ENCODE measurements at regions of chr1 and their contacts with region 1.

Region 1: DNA sequence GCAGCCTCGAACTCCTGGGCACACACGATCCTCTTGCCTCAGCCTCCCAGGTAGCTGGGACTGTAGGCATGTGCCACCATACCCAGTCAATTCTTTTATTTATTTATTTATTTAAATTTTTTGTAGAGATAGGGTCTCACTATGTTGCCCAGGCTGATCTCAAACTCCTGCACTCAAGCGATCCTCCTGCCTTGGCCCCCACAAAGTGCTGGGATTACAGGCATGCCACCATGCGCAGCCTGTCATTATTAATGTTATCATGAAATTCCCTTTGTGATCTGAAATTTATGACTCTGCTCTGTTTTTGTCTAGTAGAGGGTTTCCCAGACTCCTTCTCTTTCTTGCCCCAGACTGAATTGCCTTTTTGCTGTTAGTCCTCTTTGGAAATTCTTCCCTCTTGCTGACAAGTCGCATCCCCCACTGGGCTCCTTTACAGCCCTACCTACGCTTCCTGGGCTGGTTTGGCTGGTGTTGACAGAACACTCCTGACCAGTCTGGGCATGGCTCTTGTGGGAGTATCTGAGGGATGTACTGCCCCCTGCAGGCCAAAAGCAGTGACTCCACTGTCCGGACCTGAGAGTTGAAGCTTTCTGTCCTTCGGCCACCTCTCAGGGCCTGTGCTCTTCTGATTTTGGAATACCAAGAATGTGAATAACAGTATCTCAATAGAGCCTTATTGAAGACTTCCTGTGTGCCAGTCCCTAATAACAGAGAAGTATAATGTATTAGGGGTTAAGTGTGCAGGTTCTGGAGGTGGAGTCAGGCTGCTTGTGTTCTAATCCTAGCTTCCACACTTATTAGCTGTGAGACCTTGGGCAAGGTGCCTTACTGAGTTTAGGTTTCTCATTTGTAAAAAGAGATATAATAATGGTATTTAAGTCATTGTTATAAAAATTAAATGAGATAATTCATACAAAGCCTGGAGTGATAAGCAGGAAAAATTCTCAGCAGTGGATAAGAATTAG is 28.2 kb downstream of the TCEANC2 start:
- DNase-seq: peak; percentile 58 to 68 (median 62)
- H3K4me3 ChIP-seq: no peak overlapping the region
- H3K27ac ChIP-seq: no peak overlapping the region
- H3K4me1 ChIP-seq: peaks cover 0 to 11% (median 1%) of the 10 kb centered on the region in 4 experiments
- H3K27me3 ChIP-seq: no peaks in the 10 kb centered on the region

Region 2: DNA sequence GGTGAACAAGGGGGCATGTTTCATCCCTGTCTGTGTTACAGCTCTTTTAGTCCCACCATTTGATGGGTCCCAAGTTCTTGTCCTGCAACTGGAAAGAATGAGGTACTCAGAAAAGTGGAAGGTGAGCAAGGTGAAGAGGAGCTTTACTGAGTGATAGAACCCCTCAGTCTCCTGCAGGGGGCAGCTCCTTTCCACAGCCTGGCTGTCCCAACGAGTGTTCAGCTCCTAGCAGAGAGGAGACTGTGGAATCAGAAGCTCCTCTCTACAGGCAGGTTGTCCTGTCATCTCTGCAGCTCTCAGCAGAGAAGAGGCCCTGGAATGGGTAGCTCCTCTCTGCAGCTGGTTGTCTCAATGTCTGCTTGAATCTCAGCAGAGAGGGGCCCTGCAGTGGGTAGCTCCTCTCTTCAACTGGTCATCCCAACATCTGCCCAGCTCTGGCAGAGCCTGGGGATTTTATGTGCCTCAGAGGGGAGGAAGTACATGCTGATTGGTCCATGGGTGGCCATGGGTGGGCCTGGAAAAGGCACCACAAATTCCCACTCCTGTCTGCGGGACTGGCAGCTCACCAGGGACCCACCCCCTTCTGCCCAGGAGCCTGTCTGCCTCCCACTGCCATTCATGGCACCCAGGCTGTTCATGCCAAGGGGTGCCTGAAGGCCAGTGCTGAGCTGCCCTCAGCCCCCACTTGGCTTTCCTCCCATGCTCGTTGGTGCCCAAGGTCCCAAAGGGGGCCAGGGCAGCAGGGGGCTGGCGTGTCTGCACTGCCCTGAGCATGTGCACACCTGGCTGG is 89.3 kb before region 1 on chr1:
- CTCF ChIA-PET with region 1: no interaction called
- POLR2A ChIA-PET with region 1: no interaction called
- DNase-seq: no peak
- H3K4me3 ChIP-seq: no peak overlapping the region
- H3K27ac ChIP-seq: no peak overlapping the region
- H3K4me1 ChIP-seq: no peaks in the 10 kb centered on the region
- H3K27me3 ChIP-seq: no peaks in the 10 kb centered on the region

Region 3: DNA sequence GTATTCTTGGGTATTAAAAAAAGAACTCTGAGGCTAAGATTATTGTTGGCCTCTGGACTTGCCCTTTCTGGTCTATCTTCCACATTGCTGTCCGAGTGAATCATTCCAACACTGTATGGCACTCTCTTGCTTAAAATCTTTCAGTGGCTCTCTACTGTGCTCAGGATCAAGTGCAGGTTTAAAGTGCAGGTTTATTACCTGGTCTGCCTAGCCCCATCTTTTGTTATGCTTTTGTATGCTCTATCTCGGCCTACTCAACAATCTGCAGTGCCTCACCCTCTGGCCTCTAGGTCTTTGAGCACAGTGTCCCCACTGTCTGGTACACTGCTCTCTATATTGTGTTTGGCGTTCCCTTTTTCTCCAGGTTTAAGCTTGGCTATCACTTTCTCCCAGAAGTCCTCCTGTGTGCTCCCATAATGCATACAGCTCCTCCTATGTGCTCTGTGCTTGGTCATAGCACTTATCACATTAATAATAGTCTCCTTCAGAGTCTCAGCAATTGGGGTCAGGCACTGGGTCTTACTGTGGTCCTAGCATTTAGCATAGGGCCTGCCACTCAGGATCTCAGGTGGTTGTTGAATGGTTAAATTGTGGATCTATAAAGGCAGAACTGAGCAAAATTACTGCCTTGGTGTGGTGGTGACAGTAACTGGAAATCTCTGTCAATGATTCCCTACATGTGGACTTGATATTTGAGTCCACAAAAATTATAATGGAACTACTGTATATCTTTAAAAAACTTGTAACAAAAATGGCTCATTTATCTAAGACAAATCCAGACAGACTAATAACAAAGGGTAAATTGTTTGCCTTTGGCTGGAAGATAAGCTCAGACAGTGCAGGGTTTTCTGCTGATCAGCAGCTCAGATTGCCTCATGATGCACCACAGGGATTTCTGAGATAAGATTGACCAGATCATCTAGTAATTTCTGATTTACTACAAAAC is 53.0 kb before region 1 on chr1:
- CTCF ChIA-PET with region 1: no interaction called
- POLR2A ChIA-PET with region 1: no interaction called
- DNase-seq: no peak
- H3K4me3 ChIP-seq: no peak overlapping the region
- H3K27ac ChIP-seq: no peak overlapping the region
- H3K4me1 ChIP-seq: no peaks in the 10 kb centered on the region
- H3K27me3 ChIP-seq: no peaks in the 10 kb centered on the region

Region 4: GRCh38 chr1:54070171-54070837 is 11.3 kb before region 1 on chr1:
- CTCF ChIA-PET with region 1: interaction called, 14 read pairs
- POLR2A ChIA-PET with region 1: no interaction called
- DNase-seq: peak; percentile 67 to 80 (median 77)
- H3K4me3 ChIP-seq: no peak overlapping the region
- H3K27ac ChIP-seq: no peak overlapping the region
- H3K4me1 ChIP-seq: peaks cover 0 to 9% (median 2%) of the 10 kb centered on the region in 4 experiments
- H3K27me3 ChIP-seq: no peaks in the 10 kb centered on the region